Tibial artery (tissue), 4 donors: ENCODE measurements at regions of chr9 and their contacts with region 1.

Region 1: DNA sequence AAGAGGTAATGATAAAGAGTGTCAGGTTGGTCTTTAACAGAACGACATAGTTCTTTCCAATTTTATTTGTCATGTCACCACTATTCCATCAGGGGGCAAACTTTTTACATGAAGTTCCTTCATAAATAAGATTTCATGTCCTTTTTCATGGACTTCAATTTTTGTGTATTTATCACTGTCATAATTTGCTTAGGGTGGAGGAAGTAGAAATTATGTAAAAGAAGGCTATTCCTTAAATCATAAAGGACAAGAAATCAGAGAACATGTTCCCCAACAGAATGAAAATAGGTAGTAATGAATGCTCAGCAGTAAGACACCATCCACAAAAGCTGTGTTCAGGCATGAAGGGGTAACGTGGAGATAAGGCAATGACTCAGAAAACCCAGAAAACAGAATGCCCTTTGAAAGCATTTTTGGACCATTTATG is 72.7 kb downstream of the ZFAND5 start:
- DNase-seq: no peak
- H3K4me3 ChIP-seq: no peak overlapping the region
- H3K27ac ChIP-seq: no peak overlapping the region
- H3K4me1 ChIP-seq: peaks cover 0 to 15% (median 1%) of the 10 kb centered on the region in 4 donors
- H3K27me3 ChIP-seq: no peaks in the 10 kb centered on the region
- CTCF ChIP-seq: peak; percentile 60 to 67

Region 2: DNA sequence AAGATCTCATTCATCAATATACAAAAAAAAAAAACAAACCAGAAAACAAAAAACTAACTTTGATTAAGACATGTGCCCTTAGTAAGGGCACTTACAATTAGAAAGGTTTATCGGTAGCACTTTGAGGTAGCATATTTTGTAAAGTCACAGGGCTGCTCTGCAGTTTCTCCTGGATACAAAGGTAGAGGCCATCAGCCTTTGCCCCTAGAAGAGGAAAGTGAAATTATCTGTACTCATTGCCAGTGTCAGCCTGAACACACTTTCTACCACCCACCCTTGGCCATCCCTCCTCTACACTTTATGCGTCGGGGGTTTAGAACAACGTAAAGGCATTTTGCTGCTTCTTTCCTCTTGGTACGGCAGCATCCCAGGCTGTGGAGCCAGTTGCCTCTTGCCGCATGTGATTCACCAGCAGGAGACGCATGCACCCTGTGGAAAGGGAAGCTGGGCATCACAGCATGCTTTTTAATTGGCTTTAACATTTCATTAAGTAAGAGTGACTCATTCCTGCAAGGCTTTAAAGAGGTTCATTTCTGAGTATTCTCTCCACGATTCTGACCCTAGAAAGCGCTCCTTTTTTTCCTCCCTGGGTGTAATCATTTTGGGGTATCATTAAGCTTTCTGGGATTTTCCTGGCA is 608.6 kb before region 1 on chr9:
- intact Hi-C with region 1: no loop called
- DNase-seq: peak in 1 of 2 donors; percentile 34
- H3K4me3 ChIP-seq: no peak overlapping the region
- H3K27ac ChIP-seq: no peak overlapping the region
- H3K4me1 ChIP-seq: peaks cover 0 to 27% (median 20%) of the 10 kb centered on the region in 4 donors
- H3K27me3 ChIP-seq: no peaks in the 10 kb centered on the region
- CTCF ChIP-seq: no peak

Region 3: GRCh38 chr9:72753266-72753893 is 461.1 kb after region 1 on chr9:
- intact Hi-C with region 1: loop called (anchors 5 kb)
- DNase-seq: no peak
- H3K4me3 ChIP-seq: no peak overlapping the region
- H3K27ac ChIP-seq: no peak overlapping the region
- H3K4me1 ChIP-seq: no peaks in the 10 kb centered on the region
- H3K27me3 ChIP-seq: no peaks in the 10 kb centered on the region
- CTCF ChIP-seq: peak; percentile 28 to 33